Breast epithelium (tissue), 4 donors: ENCODE measurements at regions of chr17 and their contacts with region 1.

Region 1: GRCh38 chr17:20315821-20316220 is 151.5 kb downstream of the LGALS9B start:
- DNase-seq: no peak
- H3K4me3 ChIP-seq: no peak overlapping the region
- H3K27ac ChIP-seq: no peak overlapping the region
- H3K4me1 ChIP-seq: no peaks in the 10 kb centered on the region
- H3K27me3 ChIP-seq: no peaks in the 10 kb centered on the region
- CTCF ChIP-seq: no peak
- POLR2A ChIP-seq: no peak

Region 2: DNA sequence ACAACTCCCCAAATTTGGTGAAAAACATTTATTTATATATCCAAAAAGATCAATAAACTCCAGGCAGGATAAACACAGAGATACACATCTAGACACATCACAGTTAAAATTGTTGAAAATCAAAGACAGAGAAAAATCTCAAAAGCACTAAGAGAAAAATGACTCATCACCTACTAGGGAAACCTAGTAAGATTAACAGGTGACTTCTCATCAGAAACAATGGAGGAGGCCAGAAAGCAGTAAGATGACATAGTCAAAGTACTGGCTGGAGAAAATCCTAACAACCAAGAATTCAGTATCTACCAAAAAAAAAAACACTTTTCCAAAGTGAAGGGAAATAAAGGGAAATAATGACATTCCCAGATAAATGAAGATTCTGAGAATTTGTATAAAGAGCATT is 481.9 kb before region 1 on chr17:
- intact Hi-C with region 1: no loop called
- DNase-seq: no peak
- H3K4me3 ChIP-seq: no peak overlapping the region
- H3K27ac ChIP-seq: no peak overlapping the region
- H3K4me1 ChIP-seq: no peaks in the 10 kb centered on the region
- H3K27me3 ChIP-seq: no peaks in the 10 kb centered on the region
- CTCF ChIP-seq: no peak
- POLR2A ChIP-seq: no peak

Region 3: DNA sequence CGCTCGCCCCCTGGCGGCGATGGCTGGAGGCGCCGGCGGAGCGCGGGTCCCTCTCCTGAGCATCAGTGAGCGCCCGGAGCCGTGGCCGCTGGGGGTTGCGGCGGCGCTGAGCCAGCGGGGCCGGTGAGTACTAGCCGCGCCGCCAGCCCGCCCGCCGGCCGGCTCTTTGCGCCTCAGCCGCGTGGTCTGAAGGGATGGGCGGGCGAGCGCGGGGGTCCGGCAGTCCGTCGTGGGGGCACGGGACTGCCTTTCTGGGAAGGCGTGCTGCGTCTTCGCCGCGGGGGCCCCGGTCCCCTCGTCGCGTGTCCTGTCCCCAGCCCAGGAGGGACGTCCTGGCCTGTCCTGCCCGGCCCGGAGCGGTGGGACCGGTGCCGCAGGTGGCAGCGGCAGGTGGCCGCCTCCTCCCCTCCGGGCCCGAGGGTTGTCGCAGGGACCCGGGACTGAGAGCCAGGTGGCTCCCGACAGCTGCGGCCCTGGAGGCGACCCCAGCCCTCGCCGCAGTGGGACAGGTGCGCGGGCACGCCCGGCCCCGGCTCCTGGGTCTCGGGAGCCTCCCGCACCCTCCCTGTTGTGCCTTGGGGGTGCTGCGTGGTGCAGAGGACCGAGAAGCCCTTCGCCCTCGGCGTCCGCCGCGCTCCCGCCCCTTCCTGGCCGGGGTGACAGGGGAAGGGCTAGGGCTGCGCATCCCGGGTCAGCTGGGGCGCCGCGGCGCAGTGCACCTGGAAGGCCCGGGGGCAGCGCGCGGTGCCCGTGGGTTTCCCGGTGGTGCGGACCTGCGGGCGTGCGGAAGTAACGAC is 306.3 kb before region 1 on chr17 and contains the start of gene SPECC1:
- intact Hi-C with region 1: loop called (anchors 10 kb)
- DNase-seq: peak; percentile 55 to 72
- H3K4me3 ChIP-seq: peak within 1 kb of the TSS; percentile 65 to 96 (median 74)
- H3K27ac ChIP-seq: peak within 1 kb of the TSS; percentile 60 to 85
- H3K4me1 ChIP-seq: no peaks in the 10 kb centered on the region
- H3K27me3 ChIP-seq: no peaks in the 10 kb centered on the region
- CTCF ChIP-seq: peak in 1 of 3 donors; percentile 80
- POLR2A ChIP-seq: no peak
- total RNA-seq, gene SPECC1: 36.4 to 59.0 (median 51.8) TPM

Region 4: DNA sequence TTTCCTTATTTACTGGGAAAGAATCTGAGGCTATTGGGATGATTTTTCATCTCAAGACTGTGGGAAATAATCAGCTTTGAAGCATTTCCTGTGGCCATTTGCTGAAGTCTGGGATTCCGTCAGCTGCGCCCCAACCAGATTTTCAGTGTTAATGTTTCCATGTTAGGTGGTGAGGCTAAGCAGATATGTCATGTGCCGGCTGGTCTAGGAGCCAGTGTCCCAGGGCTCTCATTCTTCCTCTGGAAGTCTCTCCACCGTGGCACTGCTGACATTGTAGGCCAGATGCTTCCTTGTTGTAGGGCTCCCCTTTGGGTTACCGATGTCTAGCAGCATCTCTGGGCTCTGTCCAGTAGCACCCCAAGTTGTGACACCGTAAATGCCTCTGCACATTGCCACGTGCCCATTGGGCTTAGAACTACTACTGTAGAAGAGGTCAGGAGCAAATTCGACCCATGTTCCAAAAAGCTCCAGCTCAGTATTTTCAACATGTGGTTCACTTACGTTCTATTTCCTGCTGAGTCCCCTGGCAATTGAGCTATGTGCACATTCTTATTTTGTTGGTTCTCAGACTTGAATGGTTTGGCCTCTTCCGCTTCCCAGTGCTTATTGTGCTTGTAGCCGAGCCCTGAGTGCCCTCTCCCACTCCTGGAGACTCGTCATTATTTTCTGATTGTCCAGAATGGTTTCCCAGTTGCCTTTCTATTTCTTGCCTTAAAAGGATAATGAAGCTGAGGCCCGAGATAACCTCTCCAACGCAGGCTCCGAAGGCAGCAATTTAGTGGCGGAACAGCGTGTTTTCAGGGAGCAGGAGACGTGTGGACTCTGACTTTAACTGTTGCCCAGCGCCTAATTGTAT is 224.4 kb before region 1 on chr17:
- intact Hi-C with region 1: no loop called
- DNase-seq: no peak
- H3K4me3 ChIP-seq: no peak overlapping the region
- H3K27ac ChIP-seq: peak overlapping the region; percentile 69 to 84
- H3K4me1 ChIP-seq: no peaks in the 10 kb centered on the region
- H3K27me3 ChIP-seq: no peaks in the 10 kb centered on the region
- CTCF ChIP-seq: no peak
- POLR2A ChIP-seq: no peak

Region 5: DNA sequence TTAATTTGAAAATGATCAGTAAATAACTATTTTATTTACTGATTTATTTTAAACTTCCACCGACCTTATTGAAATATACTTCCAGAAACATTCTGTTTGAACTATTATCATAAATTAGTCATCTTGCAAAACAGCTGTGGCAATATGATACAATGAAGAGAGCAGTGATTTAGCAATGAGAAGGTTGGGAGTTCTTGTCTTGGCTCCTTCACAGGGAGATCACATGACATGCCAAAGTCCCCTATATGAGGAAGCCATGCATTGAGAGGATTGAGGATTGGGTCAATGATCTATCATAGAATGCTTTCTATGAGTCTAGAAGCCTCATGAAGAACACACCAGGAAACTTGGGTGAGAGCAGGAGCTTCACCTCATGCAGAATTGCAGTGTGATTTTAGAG is 71.2 kb before region 1 on chr17:
- intact Hi-C with region 1: loop called (anchors 5 kb)
- DNase-seq: no peak
- H3K4me3 ChIP-seq: no peak overlapping the region
- H3K27ac ChIP-seq: no peak overlapping the region
- H3K4me1 ChIP-seq: no peaks in the 10 kb centered on the region
- H3K27me3 ChIP-seq: no peaks in the 10 kb centered on the region
- CTCF ChIP-seq: no peak
- POLR2A ChIP-seq: no peak